Mammary epithelial cell (primary cell): ENCODE measurements at regions of chr12 and their contacts with region 1.

Region 1: DNA sequence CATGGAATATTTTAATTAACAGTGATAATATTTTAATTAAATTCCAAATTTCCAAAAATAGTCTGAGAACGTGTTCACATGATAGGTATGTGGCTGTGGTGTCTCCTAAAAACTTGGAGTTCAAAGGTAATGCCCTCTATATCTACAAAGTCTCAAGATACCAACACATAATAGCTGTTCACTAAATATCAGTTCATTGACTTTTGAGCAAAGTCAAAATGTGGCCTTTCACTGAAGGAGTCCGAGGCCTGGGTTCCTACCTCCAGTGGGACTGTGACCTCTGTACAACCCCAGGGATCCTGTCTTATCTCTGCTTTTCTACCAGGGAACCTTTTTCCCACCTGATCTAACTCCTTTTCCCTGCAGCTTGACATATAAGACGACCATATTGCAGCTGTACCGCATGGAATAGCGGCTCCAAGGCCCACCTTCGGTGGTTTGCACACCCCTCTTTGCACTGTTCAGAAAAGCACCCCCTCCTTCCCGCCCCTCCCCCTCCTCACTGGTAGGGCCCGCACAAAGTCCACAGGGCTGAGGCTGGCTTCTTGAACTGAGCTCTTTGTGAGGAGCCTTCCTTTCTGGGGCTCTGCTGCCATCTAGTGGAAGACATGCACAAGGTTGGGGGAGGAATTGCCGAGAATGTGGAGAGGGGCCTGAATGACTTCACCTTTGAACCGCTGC is 3.1 kb downstream of the CCND2 start:
- DNase-seq: peak; percentile 76
- H3K4me3 ChIP-seq: peak overlapping the region; percentile 87 to 100 (median 94)
- H3K27ac ChIP-seq: peak overlapping the region; percentile 94
- H3K4me1 ChIP-seq: peaks cover 40% of the 10 kb centered on the region
- H3K27me3 ChIP-seq: no peaks in the 10 kb centered on the region
- CTCF ChIP-seq: peak; percentile 81 to 96

Region 2: GRCh38 chr12:3418609-3419390 is 857.9 kb before region 1 on chr12:
- CTCF ChIA-PET with region 1: no interaction called
- dilution Hi-C with region 1: no loop called
- in situ Hi-C with region 1: no loop called
- intact Hi-C with region 1: no loop called
- DNase-seq: no peak
- H3K4me3 ChIP-seq: no peak overlapping the region
- H3K27ac ChIP-seq: no peak overlapping the region
- H3K4me1 ChIP-seq: no peaks in the 10 kb centered on the region
- H3K27me3 ChIP-seq: no peaks in the 10 kb centered on the region
- CTCF ChIP-seq: no peak

Region 3: GRCh38 chr12:3872800-3873636 is 403.6 kb before region 1 on chr12 and contains the start of gene PARP11:
- CTCF ChIA-PET with region 1: no interaction called
- dilution Hi-C with region 1: no loop called
- in situ Hi-C with region 1: loop called in 1 of 2 experiments (anchors 25 kb)
- intact Hi-C with region 1: loop called (anchors 5 kb)
- DNase-seq: peak; percentile 94
- H3K4me3 ChIP-seq: peak within 1 kb of the TSS; percentile 78 to 89 (median 79)
- H3K27ac ChIP-seq: peak within 1 kb of the TSS; percentile 82
- H3K4me1 ChIP-seq: peaks cover 12% of the 10 kb centered on the region
- H3K27me3 ChIP-seq: no peaks in the 10 kb centered on the region
- CTCF ChIP-seq: no peak
- total RNA-seq, gene PARP11: 8.5 to 10.6 TPM

Region 4: GRCh38 chr12:3892631-3893030 is 384.0 kb before region 1 on chr12:
- CTCF ChIA-PET with region 1: interaction called, 11 read pairs
- dilution Hi-C with region 1: no loop called
- in situ Hi-C with region 1: loop called (anchors 10 to 25 kb)
- intact Hi-C with region 1: no loop called
- DNase-seq: no peak
- H3K4me3 ChIP-seq: no peak overlapping the region
- H3K27ac ChIP-seq: no peak overlapping the region
- H3K4me1 ChIP-seq: no peaks in the 10 kb centered on the region
- H3K27me3 ChIP-seq: peaks cover 5% of the 10 kb centered on the region
- CTCF ChIP-seq: no peak

Region 5: DNA sequence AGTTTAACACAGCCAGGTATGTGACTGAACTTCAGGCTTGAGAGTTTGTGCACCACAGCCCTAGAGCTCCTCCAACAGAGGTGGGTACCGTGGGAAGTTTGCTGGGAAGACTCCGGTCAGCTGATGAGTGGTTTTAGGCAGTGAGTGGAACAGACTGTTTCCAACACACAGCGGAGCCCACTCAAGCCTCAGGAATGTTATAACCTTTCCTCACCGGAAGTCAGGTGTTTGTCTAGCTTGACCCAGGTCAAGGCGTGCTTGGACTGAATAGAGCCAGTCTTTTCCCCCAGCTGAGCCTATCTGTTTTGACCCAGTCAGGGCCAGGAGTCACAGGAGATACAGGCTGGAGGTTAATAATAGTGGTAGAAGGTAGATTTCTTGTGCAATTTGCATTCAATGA is 265.1 kb before region 1 on chr12:
- CTCF ChIA-PET with region 1: interaction called, 3 read pairs
- dilution Hi-C with region 1: loop called (anchors 10 kb)
- in situ Hi-C with region 1: no loop called
- intact Hi-C with region 1: no loop called
- DNase-seq: peak; percentile 97
- H3K4me3 ChIP-seq: no peak overlapping the region
- H3K27ac ChIP-seq: peak overlapping the region; percentile 90
- H3K4me1 ChIP-seq: peaks cover 31% of the 10 kb centered on the region
- H3K27me3 ChIP-seq: no peaks in the 10 kb centered on the region
- CTCF ChIP-seq: no peak

Region 6: DNA sequence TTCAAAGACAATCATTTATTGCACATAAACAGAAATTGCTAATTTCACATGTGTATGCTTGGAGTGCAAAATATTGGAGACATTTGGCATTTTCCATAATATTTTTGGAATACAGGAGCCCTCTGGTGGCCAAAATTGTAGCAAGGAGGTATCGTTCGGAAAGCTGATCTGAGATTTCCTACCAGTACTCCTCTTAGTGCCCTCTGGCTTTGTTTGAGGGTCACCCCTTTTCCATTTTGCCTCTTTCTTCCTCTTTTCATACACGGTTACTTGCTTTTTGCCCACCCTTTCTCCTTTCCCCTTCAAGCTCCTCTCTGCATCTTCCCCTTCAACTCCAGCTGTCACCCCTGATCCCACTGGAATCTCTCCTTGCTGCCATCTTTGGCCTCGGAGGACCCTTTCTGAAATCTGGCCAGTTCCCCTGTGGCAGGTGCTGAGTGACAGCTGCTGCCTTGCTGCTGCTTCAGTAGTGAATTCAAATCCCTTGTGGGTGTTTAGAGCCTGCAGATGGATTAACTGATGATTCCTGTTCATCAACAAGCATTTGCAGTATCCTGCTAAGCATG is 238.8 kb before region 1 on chr12:
- CTCF ChIA-PET with region 1: interaction called, 5 read pairs
- dilution Hi-C with region 1: loop called (anchors 5 kb)
- in situ Hi-C with region 1: loop called in 1 of 2 experiments (anchors 5 kb)
- intact Hi-C with region 1: loop called (anchors 1 kb)
- DNase-seq: peak; percentile 47
- H3K4me3 ChIP-seq: no peak overlapping the region
- H3K27ac ChIP-seq: no peak overlapping the region
- H3K4me1 ChIP-seq: peaks cover 19% of the 10 kb centered on the region
- H3K27me3 ChIP-seq: no peaks in the 10 kb centered on the region
- CTCF ChIP-seq: peak; percentile 75 to 79

Region 7: DNA sequence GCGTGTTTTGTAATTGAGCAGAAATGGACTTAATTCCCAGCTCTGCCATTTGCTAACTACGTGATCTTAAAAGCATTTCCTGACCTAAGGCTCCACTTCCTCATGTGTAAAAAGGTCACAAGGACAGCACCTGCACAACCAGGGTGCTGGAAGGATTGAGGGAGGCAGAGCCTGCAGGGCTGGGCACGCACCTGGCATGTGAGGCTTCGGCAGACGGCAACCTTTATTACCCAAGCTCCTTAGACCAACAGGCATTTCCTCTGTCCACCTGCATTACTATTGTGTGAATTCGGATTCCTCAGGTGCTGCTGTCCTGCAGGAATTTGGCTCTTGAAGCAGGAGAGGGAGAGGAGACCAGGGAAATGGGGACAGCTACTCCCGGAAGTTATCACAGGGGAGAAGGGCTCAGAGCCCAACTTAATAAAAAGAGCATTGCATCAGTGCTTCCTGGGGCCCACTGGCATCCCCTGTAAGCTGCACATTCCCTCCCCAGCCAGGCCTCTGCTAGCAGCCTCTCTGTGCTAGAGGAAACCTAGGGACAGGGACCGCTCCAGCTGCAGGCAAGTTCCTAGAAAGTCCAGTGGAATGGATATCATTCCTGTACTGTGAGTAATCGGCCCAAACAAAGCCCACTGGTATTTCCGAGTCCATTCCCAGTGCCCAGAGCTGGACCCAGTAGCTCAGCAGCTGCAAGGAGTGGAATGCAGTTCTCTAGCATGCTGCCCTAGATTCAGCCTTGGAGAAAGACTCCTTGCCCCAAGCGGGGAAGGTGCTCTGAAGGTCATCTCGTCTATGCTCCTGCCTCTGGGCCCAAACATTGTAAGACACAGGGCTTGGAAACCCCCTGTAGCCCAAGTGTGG is 160.2 kb before region 1 on chr12:
- CTCF ChIA-PET with region 1: no interaction called
- dilution Hi-C with region 1: loop called (anchors 5 kb)
- in situ Hi-C with region 1: loop called in 1 of 2 experiments (anchors 5 kb)
- intact Hi-C with region 1: loop called (anchors 2 kb)
- DNase-seq: peak; percentile 80
- H3K4me3 ChIP-seq: no peak overlapping the region
- H3K27ac ChIP-seq: no peak overlapping the region
- H3K4me1 ChIP-seq: peaks cover 60% of the 10 kb centered on the region
- H3K27me3 ChIP-seq: no peaks in the 10 kb centered on the region
- CTCF ChIP-seq: no peak

Region 8: GRCh38 chr12:4307593-4308333 is 31.1 kb after region 1 on chr12:
- CTCF ChIA-PET with region 1: no interaction called
- dilution Hi-C with region 1: no loop called
- in situ Hi-C with region 1: no loop called
- intact Hi-C with region 1: no loop called
- DNase-seq: peak; percentile 98
- H3K4me3 ChIP-seq: no peak overlapping the region
- H3K27ac ChIP-seq: no peak overlapping the region
- H3K4me1 ChIP-seq: peaks cover 13% of the 10 kb centered on the region
- H3K27me3 ChIP-seq: no peaks in the 10 kb centered on the region
- CTCF ChIP-seq: peak; percentile 55 to 76

Region 9: GRCh38 chr12:4323396-4323795 is 46.7 kb after region 1 on chr12:
- CTCF ChIA-PET with region 1: no interaction called
- dilution Hi-C with region 1: no loop called
- in situ Hi-C with region 1: no loop called
- intact Hi-C with region 1: no loop called
- DNase-seq: no peak
- H3K4me3 ChIP-seq: peak overlapping the region in 2 of 3 experiments; percentile 17 to 87
- H3K27ac ChIP-seq: no peak overlapping the region
- H3K4me1 ChIP-seq: peaks cover 14% of the 10 kb centered on the region
- H3K27me3 ChIP-seq: no peaks in the 10 kb centered on the region
- CTCF ChIP-seq: no peak

Region 10: DNA sequence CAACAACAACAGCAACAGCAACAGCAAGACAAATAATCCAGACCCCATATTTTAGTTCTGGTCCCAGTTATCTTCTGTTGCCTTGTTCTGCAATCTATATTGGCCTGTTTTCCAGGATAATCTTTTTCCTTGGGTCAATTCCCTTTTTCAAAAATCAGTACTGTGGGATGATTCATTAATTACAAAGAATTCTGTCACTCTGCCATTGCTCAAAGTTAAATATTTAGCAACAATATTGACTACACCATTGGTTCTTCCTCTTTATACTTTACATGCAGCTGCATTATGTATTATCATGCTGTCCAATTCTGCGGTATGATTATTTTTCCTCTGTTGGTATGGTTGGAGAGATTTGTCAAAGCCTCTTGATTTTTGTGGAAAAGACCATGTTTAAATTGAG is 433.4 kb after region 1 on chr12:
- CTCF ChIA-PET with region 1: no interaction called
- dilution Hi-C with region 1: no loop called
- in situ Hi-C with region 1: no loop called
- intact Hi-C with region 1: no loop called
- DNase-seq: no peak
- H3K4me3 ChIP-seq: no peak overlapping the region
- H3K27ac ChIP-seq: no peak overlapping the region
- H3K4me1 ChIP-seq: no peaks in the 10 kb centered on the region
- H3K27me3 ChIP-seq: no peaks in the 10 kb centered on the region
- CTCF ChIP-seq: no peak